GM18951 (cell line): ENCODE measurements at regions of chr2 and their contacts with region 1.

Region 1: DNA sequence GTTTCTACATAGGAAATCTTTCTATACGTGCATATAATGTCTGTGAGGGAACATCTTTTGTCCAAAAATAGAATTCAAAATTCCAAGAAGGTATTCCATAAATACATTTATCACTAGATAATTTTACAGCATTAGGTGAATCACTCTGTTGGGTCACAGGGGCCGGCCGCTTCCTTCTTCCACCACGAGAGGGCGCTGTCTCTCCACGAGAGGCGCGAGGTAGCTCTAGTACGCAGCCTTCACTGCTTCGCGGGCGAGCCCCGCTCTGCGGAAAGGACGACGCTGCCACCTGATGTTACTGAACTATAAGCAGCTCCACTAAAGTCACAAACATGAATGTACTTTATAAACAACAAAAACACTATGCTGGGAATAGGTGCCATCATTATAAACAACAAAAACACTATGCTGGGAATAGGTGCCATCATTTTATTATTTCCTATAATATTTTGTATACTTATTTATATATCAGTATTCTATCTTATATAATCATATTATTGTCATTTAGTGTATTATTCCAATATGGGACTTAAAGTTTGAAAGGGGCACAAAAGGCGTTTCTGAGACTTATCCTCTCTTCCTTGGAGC is 69.4 kb upstream of the REV1 start:
- POLR2A ChIP-seq: no peak

Region 2: GRCh38 chr2:100262555-100263320 is 703.6 kb after region 1 on chr2:
- in situ Hi-C with region 1: loop called (anchors 25 kb)
- POLR2A ChIP-seq: no peak